Activated CD4-positive, alpha-beta T cell treated with anti-CD3 and anti-CD28 coated beads, Interleukin-2, amount 10 ng/mL, durations not matched to agents 24 days and 14 days (primary cell): ENCODE measurements at regions of chr14 and their contacts with region 1.

Region 1: GRCh38 chr14:50778721-50779483 is 52.1 kb downstream of the NIN start:
- DNase-seq: no peak
- H3K4me3 Mint-ChIP-seq: no peak overlapping the region
- H3K27ac Mint-ChIP-seq: peak overlapping the region; percentile 37
- H3K4me1 Mint-ChIP-seq: peaks cover 24% of the 10 kb centered on the region
- H3K27me3 Mint-ChIP-seq: no peaks in the 10 kb centered on the region

Region 2: DNA sequence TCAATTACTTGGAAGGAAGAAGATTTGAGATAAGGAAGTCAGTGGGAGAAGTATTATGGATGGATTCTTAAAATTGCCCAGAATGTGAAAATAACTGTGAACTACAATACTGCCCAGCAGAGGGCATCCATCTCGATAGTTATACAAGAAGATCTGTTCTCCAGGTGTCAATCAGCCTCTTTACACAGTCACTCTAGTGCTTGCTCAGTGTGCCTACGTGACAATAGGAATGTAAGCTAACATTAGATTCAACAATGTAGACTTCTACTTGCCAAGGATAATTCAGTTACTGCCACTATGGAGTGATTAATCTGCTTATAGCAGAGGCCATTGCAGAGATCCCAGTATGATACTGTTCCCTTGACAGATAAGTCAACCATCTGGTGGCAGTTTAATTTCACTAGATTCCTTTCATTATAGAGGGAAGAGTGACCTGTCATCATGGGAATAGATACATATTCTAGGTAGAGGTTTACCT is 235.9 kb before region 1 on chr14:
- intact Hi-C with region 1: loop called (anchors 1 kb)
- DNase-seq: peak; percentile 82
- H3K4me3 Mint-ChIP-seq: no peak overlapping the region
- H3K27ac Mint-ChIP-seq: no peak overlapping the region
- H3K4me1 Mint-ChIP-seq: peaks cover 8% of the 10 kb centered on the region
- H3K27me3 Mint-ChIP-seq: peaks cover 10% of the 10 kb centered on the region

Region 3: DNA sequence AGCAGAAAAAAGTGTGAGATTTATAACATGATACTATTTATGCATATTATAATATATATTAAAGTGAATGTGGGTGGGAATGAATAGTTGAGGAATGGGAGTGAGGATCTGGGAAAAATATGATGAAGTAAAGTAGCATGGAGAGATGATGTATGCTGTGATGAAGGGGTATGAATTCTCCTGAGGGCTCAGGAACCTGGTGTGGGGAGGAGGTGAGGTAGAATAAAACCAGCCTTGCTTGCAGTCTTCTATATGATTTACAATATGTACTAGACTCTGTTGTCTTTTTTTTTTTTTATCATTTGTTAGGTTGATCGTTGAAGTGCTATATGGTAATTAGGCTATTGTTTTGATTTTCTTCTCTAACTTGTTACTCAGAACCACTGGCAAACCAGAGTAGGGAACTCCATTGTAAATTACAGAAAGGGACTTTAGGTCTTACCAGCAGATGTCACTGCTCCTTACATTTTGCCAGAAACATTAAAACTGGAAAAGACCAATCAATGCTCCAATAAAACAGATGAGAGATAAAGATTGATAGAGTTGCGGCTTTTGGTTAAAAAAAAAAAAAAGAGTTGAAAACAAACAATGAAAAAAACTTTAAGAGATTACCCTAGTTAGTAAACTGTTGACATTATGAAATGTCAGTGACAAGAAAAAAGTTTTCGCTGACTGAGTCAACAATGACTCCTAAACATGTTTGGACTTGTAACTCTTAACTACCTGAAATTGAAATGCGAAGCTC is 179.0 kb before region 1 on chr14:
- intact Hi-C with region 1: loop called (anchors 1 kb)
- DNase-seq: no peak
- H3K4me3 Mint-ChIP-seq: no peak overlapping the region
- H3K27ac Mint-ChIP-seq: no peak overlapping the region
- H3K4me1 Mint-ChIP-seq: no peaks in the 10 kb centered on the region
- H3K27me3 Mint-ChIP-seq: peaks cover 4% of the 10 kb centered on the region

Region 4: DNA sequence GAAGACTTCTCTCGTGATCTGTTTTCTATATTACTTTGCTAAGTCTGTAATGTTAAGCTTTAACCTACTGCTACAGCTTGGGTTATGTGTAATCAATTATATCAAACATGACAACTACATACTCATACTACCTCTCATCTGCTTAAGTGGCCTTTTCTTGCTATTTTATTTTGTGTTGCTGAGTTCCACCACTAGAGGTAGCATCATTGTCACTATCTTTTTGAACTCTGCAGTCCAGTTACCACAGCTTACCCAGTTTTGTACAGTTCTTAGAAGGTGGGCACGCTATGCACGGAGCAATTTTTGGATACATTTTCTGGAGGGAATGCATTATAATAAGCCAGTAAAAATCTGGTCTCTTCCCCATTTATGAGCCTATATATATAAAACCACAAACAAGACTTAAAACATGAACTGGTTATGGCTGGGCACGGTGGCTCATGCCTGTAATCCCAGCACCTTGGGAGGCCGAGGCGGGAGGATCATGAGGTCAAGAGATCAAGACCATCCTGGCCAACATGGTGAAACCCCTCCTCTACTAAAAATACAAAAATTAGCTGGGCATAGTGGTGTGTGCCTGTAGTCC is 159.3 kb before region 1 on chr14:
- intact Hi-C with region 1: loop called (anchors 1 kb)
- DNase-seq: peak; percentile 63
- H3K4me3 Mint-ChIP-seq: no peak overlapping the region
- H3K27ac Mint-ChIP-seq: no peak overlapping the region
- H3K4me1 Mint-ChIP-seq: no peaks in the 10 kb centered on the region
- H3K27me3 Mint-ChIP-seq: peaks cover 2% of the 10 kb centered on the region

Region 5: DNA sequence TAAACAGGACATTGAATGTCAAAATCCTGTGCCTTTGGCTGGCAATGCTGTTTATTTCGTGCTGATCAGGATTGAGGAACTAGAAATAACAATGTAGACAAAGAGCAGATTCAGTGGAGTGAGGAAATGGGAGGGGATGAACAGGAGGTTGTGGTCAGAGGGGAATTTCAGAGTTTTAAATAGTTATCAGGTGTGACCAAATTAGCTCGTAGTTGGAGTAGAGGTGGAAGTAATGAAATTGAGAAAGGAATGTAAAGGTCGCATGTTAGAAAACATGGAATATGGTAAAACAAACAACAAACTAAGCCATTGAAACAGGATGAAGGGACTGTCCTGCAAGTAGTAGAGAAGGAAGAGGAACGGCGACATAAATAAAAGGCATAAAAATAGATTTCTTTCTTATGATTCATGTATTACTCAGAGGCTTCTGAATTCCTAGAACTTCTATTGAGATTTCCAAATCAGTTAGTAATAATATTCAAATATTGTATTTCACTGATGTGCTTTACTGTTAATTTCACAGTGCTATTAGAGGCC is 101.3 kb before region 1 on chr14:
- intact Hi-C with region 1: no loop called
- DNase-seq: no peak
- H3K4me3 Mint-ChIP-seq: peak overlapping the region; percentile 3
- H3K27ac Mint-ChIP-seq: no peak overlapping the region
- H3K4me1 Mint-ChIP-seq: peaks cover 9% of the 10 kb centered on the region
- H3K27me3 Mint-ChIP-seq: peaks cover 7% of the 10 kb centered on the region

Region 6: DNA sequence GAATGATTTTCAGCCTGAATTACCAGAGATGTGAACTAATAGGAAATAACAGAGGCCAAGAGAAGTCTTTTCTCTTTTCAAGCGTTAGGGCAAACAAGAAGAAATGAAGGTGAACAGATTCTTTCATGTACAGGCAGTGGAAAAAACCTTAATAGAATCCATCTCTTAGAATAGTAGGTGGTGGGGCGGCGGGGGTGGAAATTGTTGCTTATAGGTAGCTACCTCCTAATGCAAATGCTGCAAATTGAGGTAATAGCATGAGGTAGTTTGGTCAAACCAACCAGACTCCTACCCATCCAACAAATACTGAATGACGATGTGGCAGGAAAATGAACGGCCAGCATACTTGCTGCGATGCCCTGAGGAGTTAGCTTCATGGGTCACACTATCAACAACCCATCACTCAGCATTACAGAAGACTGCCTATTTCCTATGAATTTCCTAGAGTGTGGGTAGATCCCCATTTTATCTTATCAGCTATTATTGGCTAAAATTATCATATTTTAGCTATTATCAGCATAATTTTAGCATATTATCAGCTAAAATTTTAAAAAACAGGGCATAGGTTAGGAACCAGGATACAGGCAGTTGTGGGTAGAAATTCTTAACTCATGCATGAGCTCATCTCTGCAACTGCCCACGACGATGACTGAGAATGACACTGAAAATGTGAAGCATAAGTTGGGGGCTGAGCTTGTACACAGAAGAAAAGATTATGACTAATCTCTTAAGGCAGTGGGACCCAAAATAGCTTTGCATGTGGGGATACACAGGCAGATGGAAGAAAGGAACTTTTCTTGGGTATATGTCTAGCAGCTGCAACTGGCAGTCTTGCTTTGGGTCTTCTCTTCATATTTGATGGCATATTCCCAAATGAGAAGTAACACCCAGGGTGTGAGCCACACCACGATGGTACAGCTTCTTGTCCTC is 16.6 kb before region 1 on chr14:
- intact Hi-C with region 1: no loop called
- DNase-seq: no peak
- H3K4me3 Mint-ChIP-seq: no peak overlapping the region
- H3K27ac Mint-ChIP-seq: peak overlapping the region; percentile 72
- H3K4me1 Mint-ChIP-seq: peaks cover 23% of the 10 kb centered on the region
- H3K27me3 Mint-ChIP-seq: no peaks in the 10 kb centered on the region

Region 7: DNA sequence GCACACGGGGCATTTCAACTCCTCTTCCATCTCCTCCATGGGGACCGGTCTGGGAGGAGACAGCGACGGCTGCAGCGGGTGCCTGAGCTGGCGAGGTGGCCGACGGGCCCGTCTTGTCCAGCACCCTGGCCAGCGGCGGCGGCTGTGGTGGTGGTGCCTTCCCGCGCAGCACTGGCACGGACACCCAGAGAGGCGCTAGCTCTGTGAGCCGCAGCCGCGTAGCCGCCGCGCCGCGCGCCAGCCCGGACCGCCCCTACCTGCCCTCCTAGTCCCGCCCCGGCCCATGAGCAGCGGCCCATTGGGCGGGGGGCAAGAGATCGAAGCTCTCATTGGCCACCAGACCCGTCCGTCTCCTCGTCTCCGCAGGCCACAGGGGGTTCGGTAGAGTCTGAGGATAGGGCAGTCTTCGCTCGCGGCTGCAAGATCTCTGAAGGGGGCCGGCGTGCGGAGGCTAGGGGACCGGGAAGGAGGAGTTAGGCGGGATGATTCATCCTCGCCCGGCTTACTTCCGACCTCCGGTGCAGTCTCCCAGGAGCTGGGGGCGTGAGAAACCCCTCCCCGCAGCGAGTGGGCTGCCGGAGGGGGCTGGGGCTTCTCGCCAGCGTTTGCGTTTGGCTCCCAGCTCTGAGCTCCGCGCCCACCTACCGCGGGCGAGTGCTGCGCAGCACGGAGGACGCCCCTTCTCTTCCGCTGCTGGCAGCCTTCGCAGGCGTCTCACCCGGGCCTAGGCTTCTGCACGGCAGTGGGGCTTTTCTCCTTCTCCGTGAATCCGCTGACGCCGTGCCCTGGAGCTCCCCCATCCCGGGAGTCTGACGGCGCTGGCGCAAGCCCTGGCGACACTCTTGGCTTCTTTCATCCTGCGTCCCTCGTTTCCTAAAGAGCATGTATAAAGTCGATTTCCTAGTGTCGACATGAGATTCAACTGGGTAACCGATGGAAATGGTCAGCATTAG is 316.3 kb after region 1 on chr14 and contains the start of gene TRIM9:
- intact Hi-C with region 1: no loop called
- DNase-seq: peak; percentile 97
- H3K4me3 Mint-ChIP-seq: peak within 1 kb of the TSS; percentile 91
- H3K27ac Mint-ChIP-seq: peak within 1 kb of the TSS; percentile 51
- H3K4me1 Mint-ChIP-seq: peaks cover 15% of the 10 kb centered on the region
- H3K27me3 Mint-ChIP-seq: peaks cover 55% of the 10 kb centered on the region
- total RNA-seq, gene TRIM9: 0.47 and 0.52 TPM in 2 replicates